ENCODE measurements at regions of chr17 and their contacts with region 1.

Region 1: GRCh38 chr17:8189711-8190477 is at the start of gene BORCS6:
- DNase-seq: peak; percentile 98
- ATAC-seq: peak; percentile 67
- H3K4me3 Mint-ChIP-seq: no peak within 1 kb of the TSS
- H3K27ac Mint-ChIP-seq: peak within 1 kb of the TSS; percentile 86
- H3K4me1 Mint-ChIP-seq: peaks cover 10% of the 10 kb centered on the region
- H3K27me3 Mint-ChIP-seq: no peaks in the 10 kb centered on the region
- total RNA-seq, gene BORCS6: 3.9 to 4.5 TPM

Region 2: GRCh38 chr17:8138672-8139371 is 51.1 kb before region 1 on chr17:
- CTCF ChIA-PET with region 1: interaction called, 5 read pairs
- POLR2A ChIA-PET with region 1: interaction called, 4 read pairs
- intact Hi-C with region 1: loop called (anchors 1 kb)
- DNase-seq: peak; percentile 98
- ATAC-seq: peak; percentile 90
- H3K4me3 Mint-ChIP-seq: no peak overlapping the region
- H3K27ac Mint-ChIP-seq: no peak overlapping the region
- H3K4me1 Mint-ChIP-seq: no peaks in the 10 kb centered on the region
- H3K27me3 Mint-ChIP-seq: no peaks in the 10 kb centered on the region

Region 3: GRCh38 chr17:8204761-8205555 is 15.1 kb after region 1 on chr17:
- CTCF ChIA-PET with region 1: interaction called, 6 read pairs
- POLR2A ChIA-PET with region 1: interaction called, 7 read pairs
- intact Hi-C with region 1: loop called (anchors 1 kb)
- DNase-seq: no peak
- ATAC-seq: no peak
- H3K4me3 Mint-ChIP-seq: no peak overlapping the region
- H3K27ac Mint-ChIP-seq: no peak overlapping the region
- H3K4me1 Mint-ChIP-seq: peaks cover 15% of the 10 kb centered on the region
- H3K27me3 Mint-ChIP-seq: no peaks in the 10 kb centered on the region

Region 4: DNA sequence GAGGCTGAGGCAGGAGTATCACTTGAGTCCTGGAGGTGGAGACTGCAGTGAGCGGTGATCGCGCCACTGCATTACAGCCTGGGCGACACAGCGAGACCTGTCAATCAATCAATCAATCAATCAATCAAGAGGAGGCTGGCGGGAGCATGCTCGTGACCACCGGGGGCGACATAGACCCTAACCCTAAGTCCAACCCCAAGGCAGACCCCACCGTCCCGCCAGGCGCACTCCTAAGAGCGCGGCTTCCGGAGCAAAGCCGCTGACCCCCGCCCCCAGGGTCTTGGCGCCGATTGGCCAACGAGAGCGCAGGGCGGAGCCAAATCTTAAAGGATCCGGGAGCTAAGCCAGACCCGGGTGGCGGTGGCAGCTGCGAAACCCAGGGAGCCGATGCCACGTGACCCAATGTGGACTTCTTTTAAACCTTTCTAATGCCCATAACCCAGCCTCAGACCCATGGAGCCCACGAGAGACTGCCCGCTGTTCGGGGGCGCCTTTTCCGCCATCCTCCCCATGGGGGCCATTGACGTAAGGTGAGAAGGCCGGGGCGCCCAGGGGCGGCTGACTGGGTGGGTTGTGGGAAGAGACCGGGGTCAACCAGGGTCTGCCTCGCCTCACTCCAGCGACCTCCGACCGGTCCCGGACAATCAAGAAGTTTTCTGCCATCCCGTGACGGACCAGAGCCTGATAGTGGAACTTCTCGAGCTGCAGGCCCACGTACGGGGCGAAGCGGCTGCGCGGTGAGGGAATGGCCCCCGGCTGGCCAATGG is 98.6 kb after region 1 on chr17 and contains the start of gene RANGRF:
- CTCF ChIA-PET with region 1: no interaction called
- POLR2A ChIA-PET with region 1: interaction called, 7 read pairs
- intact Hi-C with region 1: loop called in 1 of 2 experiments (anchors 2 kb)
- DNase-seq: peak; percentile 91
- ATAC-seq: peak; percentile 94
- H3K4me3 Mint-ChIP-seq: peak within 1 kb of the TSS; percentile 84
- H3K27ac Mint-ChIP-seq: peak within 1 kb of the TSS; percentile 93
- H3K4me1 Mint-ChIP-seq: peaks cover 20% of the 10 kb centered on the region
- H3K27me3 Mint-ChIP-seq: no peaks in the 10 kb centered on the region
- total RNA-seq, gene RANGRF: 37.9 to 40.1 TPM

Region 5: DNA sequence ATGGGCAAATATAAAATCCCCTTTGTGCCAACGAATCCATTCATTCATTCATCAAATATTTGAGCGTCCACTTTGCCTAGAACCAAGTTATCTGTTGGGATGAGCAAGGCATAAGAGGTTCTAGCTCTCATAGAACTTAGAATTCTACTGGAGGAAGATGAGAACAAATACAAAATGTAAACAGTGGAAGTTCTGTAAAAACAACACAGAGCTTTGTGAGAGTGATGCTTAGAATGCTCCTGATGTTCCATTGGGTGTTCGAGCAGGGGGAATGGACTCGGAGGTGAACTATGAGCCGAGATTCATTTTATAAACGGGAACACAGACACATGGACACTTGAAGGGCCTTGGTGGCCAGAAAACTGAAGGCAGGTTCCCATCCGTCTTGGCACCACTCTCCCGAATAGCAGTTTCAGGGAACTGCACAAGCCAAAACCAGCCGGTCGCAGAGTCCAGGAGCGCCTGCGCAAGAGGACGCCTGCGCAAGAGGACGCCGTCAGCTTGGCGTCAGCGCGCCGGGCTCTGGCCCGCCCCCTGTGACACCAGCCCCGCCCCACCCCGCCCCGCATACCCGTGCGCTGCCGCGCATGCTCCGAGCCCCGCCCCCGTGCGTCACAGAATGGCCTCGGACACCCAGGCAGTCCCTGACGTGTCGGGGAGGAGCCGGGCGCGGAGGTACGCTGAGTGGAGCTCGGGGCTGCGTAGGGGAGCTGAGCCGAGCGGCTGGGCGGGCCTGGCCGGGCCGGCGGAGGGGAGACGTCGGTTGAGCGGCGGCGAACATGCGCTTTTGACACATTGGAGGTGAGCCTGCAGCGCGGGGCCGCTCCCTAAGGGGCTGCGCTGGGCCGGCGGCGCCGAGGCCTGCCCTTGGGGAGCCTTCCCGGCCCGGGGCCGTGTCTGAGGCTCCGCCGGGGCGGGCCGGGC is 245.6 kb after region 1 on chr17 and contains the start of gene NDEL1:
- CTCF ChIA-PET with region 1: no interaction called
- POLR2A ChIA-PET with region 1: no interaction called
- intact Hi-C with region 1: loop called in 1 of 2 experiments (anchors 1 kb)
- DNase-seq: peak; percentile 100
- ATAC-seq: peak; percentile 98
- H3K4me3 Mint-ChIP-seq: peak within 1 kb of the TSS; percentile 87
- H3K27ac Mint-ChIP-seq: peak within 1 kb of the TSS; percentile 91
- H3K4me1 Mint-ChIP-seq: peaks cover 29% of the 10 kb centered on the region
- H3K27me3 Mint-ChIP-seq: no peaks in the 10 kb centered on the region
- total RNA-seq, gene NDEL1: 51.9 to 58.6 TPM

Measured in activated CD4-positive, alpha-beta T cell treated with anti-CD3 and anti-CD28 coated beads for 36 hours (primary cell).